ENCODE measurements at regions of chr4 and their contacts with region 1.

Region 1: GRCh38 chr4:75995727-75996126 is 5.0 kb upstream of the SDAD1 start:
- DNase-seq: peak; percentile 45
- H3K4me3 ChIP-seq: no peak overlapping the region
- H3K27ac ChIP-seq: no peak overlapping the region
- H3K4me1 ChIP-seq: no peaks in the 10 kb centered on the region
- H3K27me3 ChIP-seq: no peaks in the 10 kb centered on the region
- CTCF ChIP-seq: peak; percentile 76
- EP300 ChIP-seq: no peak
- RAD21 ChIP-seq: peak; percentile 74

Region 2: DNA sequence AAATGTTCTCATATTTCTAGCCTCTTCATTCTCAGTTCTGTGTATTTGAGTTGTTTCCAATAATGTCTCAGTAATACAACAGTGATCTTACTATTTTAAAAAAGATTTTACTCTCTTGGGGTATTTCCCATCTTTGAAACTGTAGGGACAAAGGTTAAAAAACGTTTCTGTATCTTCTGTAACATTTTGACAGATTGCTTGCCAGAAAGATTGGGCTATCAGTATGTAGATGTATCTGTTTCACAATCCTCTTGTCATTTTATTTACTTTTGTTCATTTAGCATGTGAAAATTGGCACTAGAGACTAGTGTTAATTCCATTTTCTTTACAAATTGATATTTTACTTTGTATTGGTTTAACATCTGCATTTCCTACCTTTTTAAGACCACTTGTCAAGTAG is 17.8 kb after region 1 on chr4:
- CTCF ChIA-PET with region 1: interaction called, 10 read pairs
- POLR2A ChIA-PET with region 1: no interaction called
- DNase-seq: no peak
- H3K4me3 ChIP-seq: no peak overlapping the region
- H3K27ac ChIP-seq: no peak overlapping the region
- H3K4me1 ChIP-seq: peaks cover 0 to 5% of the 10 kb centered on the region in 2 experiments; a peak in 1 of 4 replicates
- H3K27me3 ChIP-seq: no peaks in the 10 kb centered on the region
- CTCF ChIP-seq: no peak
- EP300 ChIP-seq: no peak
- RAD21 ChIP-seq: no peak

Region 3: GRCh38 chr4:76055016-76055415 is 59.3 kb after region 1 on chr4:
- CTCF ChIA-PET with region 1: interaction called, 11 read pairs
- POLR2A ChIA-PET with region 1: no interaction called
- DNase-seq: no peak
- H3K4me3 ChIP-seq: no peak overlapping the region
- H3K27ac ChIP-seq: no peak overlapping the region
- H3K4me1 ChIP-seq: no peaks in the 10 kb centered on the region
- H3K27me3 ChIP-seq: peaks cover 8% of the 10 kb centered on the region; the same call in 1 of the 2 replicates
- CTCF ChIP-seq: no peak
- EP300 ChIP-seq: no peak
- RAD21 ChIP-seq: no peak

Region 4: GRCh38 chr4:76067652-76068286 is 72.0 kb after region 1 on chr4:
- CTCF ChIA-PET with region 1: interaction called, 35 read pairs
- POLR2A ChIA-PET with region 1: no interaction called
- DNase-seq: peak; percentile 71
- H3K4me3 ChIP-seq: no peak overlapping the region
- H3K27ac ChIP-seq: no peak overlapping the region
- H3K4me1 ChIP-seq: no peaks in the 10 kb centered on the region
- H3K27me3 ChIP-seq: no peaks in the 10 kb centered on the region
- CTCF ChIP-seq: peak; percentile 95
- EP300 ChIP-seq: no peak
- RAD21 ChIP-seq: peak; percentile 85

Region 5: DNA sequence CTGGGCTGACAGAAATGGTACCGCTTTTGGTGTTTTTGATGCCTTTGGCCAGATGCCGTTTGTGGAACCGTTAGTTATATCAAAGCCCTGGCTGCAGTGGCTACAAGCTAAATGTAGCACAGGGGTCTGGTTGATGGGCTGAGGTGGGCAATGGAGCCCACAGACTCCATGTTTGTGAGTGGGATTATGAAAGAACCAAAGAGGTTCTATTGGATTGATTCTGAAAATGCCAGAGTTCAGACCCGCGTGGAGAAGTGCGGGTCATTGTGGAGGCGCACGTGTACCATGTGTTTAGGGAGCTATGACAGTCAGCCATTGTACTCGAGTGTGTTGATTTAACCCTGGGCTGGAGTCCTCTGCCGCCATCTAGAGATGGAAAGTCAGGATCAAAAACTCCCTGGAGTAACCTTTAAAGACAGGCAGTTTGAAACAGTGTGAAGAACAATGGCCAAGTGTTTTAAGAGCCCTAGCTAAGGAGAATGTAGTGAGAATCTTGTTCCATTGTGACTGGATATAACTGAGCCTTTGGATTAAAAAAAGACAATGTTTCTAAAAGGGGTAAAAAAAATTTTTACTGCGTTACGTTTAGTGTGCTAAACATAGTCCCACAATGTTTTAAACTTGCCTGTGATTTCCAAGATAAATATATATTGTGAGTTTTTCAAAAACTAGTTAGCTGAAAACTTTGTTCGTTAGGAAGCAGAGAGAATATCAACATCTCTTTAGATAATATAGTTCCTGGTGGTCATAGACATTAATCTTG is 91.5 kb after region 1 on chr4:
- CTCF ChIA-PET with region 1: interaction called, 29 read pairs
- POLR2A ChIA-PET with region 1: no interaction called
- DNase-seq: peak; percentile 51
- H3K4me3 ChIP-seq: no peak overlapping the region; a peak in 1 of 4 replicates
- H3K27ac ChIP-seq: no peak overlapping the region
- H3K4me1 ChIP-seq: peaks cover 0 to 4% of the 10 kb centered on the region in 2 experiments; a peak in 2 of 4 replicates
- H3K27me3 ChIP-seq: no peaks in the 10 kb centered on the region; the same call in 1 of the 2 replicates
- CTCF ChIP-seq: peak; percentile 56
- EP300 ChIP-seq: no peak
- RAD21 ChIP-seq: peak; percentile 60